ENCODE measurements at regions of chr4 and their contacts with region 1.

Region 1: DNA sequence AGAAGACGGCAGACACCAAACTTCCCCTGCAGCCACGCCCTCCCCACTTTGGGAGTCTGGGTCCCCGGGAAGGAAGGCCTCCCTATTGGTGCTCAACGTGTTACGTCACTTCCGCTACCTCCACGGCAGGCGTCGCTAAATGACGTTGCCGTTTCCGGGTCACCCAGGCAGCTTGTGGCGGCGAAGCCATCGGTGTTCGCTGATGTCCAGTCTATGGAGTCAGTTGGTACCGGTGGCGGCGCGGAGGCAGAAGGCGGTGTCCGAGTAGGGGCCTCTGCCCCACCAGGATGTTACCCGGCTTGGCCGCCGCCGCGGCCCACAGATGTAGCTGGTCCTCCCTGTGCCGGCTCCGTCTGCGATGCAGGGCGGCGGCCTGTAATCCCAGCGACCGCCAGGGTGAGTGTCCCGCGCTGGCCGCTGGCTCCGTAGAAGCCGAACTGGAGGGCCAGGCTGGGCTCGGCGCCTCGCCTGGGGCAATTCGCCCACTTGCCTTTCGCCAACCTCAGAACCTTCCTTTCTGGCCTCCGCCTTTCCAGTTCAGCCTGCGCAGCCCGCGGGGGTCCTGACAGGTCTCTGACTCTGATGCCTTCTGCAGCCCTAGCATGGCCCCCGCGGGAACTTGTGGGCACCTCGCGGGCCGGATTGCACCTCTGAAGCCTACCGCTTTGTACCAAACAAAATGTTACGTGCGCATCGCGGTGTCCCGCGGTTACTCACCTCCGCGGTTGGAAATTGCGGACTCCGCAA is at the start of gene SLC30A9:
- DNase-seq: peak; percentile 92 to 96
- ATAC-seq: peak; percentile 99 to 100 (median 99)
- H3K4me3 ChIP-seq: peak within 1 kb of the TSS; percentile 90
- H3K27ac ChIP-seq: peak within 1 kb of the TSS; percentile 90
- H3K4me1 ChIP-seq: peaks cover 18% of the 10 kb centered on the region
- H3K27me3 ChIP-seq: no peaks in the 10 kb centered on the region
- CTCF ChIP-seq: peak; percentile 46
- total RNA-seq, gene SLC30A9: 32.6 to 38.8 (median 36.7) TPM

Region 2: GRCh38 chr4:41934815-41935651 is 55.5 kb before region 1 on chr4 and contains the start of gene TMEM33:
- intact Hi-C with region 1: loop called in 1 of 2 experiments (anchors 2 kb)
- DNase-seq: peak; percentile 85 to 91
- ATAC-seq: peak; percentile 93 to 99 (median 96)
- H3K4me3 ChIP-seq: peak within 1 kb of the TSS; percentile 92
- H3K27ac ChIP-seq: peak within 1 kb of the TSS; percentile 87
- H3K4me1 ChIP-seq: peaks cover 34% of the 10 kb centered on the region
- H3K27me3 ChIP-seq: no peaks in the 10 kb centered on the region
- CTCF ChIP-seq: peak; percentile 29
- total RNA-seq, gene TMEM33: 24.2 to 39.2 (median 28.8) TPM

Region 3: DNA sequence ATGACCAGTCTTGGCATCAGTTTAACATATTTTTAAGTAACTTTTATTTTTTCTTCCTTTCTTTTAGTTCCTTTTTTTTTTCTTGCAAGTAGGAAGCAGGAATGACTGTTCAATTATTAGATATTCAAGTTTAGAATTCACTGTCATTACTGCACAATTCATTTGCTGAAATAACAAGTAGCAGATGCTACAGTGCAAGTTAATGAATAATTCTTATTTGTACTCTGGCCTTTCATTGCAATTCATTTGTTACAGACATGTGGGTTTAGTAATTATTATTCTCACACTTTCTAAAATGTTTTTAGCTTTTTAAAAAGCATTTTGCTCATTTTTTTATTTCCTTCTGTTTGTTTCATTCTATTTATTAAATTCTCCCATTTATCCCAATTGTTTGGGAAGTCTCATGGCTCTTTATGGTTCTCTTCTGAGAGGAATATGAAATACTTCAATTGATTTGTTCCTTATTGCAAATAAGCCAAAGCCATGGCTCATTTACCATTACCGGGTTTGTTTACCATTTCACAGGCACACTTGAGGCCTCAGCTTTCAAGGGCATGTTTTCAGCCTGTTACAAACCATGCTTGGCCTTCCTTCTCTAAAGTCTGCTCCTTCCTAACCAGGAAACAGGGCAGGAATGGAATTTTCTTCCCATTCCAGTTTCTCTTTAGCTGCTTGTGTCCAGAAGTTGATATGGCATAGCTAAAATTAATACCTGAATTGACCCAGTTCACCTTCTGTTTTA is 13.6 kb before region 1 on chr4:
- intact Hi-C with region 1: no loop called
- DNase-seq: no peak
- ATAC-seq: no peak
- H3K4me3 ChIP-seq: no peak overlapping the region
- H3K27ac ChIP-seq: no peak overlapping the region
- H3K4me1 ChIP-seq: no peaks in the 10 kb centered on the region
- H3K27me3 ChIP-seq: no peaks in the 10 kb centered on the region
- CTCF ChIP-seq: no peak

Region 4: GRCh38 chr4:42262701-42263490 is 272.4 kb after region 1 on chr4:
- intact Hi-C with region 1: no loop called
- DNase-seq: no peak
- ATAC-seq: no peak
- H3K4me3 ChIP-seq: no peak overlapping the region
- H3K27ac ChIP-seq: no peak overlapping the region
- H3K4me1 ChIP-seq: no peaks in the 10 kb centered on the region
- H3K27me3 ChIP-seq: no peaks in the 10 kb centered on the region
- CTCF ChIP-seq: no peak